Activated T-helper 1 cell treated with anti-CD3 and anti-CD28 coated beads, Interleukin-12 subunit alpha, Interleukin-12 subunit beta, Interleukin-2, Interleukin-4 antibody, amounts not matched to agents 30 ng/mL and 10 ng/mL and 1 ng/mL, durations not matched to agents 14 hours and 24 hours and 36 hours (primary cell): ENCODE measurements at regions of chrX and their contacts with region 1.

Region 1: DNA sequence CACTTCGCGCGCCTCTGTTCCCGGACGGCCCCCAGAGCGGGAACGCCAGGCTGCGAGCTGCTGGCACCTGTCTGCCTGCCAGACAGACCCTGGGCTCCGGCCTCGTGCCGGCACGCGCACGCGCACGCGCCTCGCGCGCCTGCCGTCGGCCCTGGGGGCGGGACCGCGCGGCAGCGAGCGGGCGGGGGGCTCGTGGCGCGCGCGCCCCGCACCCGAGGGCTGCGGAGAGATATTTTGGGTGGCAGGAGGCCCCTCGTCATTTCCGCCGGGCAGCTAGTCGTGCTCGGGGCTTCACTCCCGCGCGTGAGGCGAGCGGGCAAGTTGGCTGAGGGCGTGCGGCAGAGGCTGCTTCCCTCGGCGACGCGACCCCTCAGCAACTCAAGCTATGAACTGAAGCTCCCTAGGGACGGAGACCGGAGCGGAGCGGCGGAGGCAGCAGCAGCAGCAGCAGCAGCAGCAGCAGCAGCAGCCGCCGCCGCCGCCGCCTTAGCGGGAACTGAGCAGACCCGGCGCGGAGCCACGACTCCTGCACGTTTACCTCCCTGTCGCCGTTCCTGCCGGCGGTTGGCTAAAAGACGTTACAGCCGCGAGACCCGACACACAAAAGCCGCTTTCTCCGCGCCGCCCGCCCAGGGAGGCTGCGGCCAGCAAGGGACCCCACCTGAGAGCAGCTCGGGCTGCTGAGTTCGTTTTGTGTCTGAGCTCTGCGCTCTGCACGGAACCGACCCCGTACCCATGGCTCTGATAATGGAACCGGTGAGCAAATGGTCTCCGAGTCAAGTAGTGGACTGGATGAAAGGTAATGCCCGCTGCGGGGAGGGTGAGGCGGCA is at the start of gene CNKSR2:
- DNase-seq: peak; percentile 60
- H3K4me3 Mint-ChIP-seq: peak within 1 kb of the TSS; percentile 91
- H3K27ac Mint-ChIP-seq: peak within 1 kb of the TSS; percentile 40
- H3K4me1 Mint-ChIP-seq: peaks cover 14% of the 10 kb centered on the region
- H3K27me3 Mint-ChIP-seq: peaks cover 6% of the 10 kb centered on the region
- total RNA-seq, gene CNKSR2: 7.4 and 9.1 TPM in 2 replicates

Region 2: DNA sequence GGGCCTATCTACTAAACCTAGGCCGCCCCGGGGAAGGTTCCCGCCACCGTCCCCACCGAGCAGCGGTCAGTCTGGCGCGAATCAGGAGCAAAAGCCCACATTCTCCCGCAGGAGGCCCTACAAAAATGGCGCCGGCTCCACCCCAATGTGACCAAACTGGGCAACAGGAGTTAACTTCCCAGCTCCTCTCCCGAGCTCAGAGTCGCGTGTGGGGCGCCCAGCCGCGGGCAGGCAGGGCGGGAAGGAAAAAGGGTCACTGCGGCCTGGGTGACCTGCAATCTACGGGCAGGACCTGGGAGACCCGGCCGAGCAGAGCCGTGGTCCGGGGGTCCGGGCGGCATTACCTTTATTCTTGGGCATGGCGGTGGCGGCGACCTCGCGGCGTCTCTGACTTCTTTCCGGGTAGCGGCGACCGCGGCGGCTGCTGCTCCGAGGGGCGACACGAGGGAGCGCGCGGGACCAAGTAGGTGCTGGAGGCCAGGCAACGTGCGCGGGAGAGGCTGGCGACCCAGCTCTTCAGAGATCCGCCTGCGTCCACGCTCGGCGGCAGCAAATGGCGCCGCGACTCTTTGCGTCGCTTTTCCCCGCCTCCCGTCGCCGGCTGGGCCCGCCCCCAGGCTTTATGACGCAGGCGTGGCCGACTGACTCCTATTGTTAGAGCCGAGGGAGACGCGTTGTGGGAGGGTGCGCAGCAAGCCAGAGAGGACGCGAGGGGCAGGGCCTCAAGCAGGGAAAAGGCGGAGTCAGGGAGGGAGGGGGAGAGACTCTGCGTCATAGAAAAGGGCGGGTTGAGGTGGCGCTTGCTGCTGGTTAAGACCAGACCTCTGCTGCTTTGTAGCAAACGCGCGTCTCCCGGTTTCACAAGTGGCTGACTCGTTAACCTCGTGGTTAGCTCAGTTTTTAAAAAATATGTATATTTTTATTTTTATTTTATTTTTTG is 1232.8 kb before region 1 on chrX and contains the start of gene EIF1AX:
- intact Hi-C with region 1: loop called (anchors 5 kb)
- DNase-seq: peak; percentile 93
- H3K4me3 Mint-ChIP-seq: peak within 1 kb of the TSS; percentile 90
- H3K27ac Mint-ChIP-seq: peak within 1 kb of the TSS; percentile 84
- H3K4me1 Mint-ChIP-seq: peaks cover 29% of the 10 kb centered on the region
- H3K27me3 Mint-ChIP-seq: no peaks in the 10 kb centered on the region
- total RNA-seq, gene EIF1AX: 107 TPM in 2 replicates

Region 3: DNA sequence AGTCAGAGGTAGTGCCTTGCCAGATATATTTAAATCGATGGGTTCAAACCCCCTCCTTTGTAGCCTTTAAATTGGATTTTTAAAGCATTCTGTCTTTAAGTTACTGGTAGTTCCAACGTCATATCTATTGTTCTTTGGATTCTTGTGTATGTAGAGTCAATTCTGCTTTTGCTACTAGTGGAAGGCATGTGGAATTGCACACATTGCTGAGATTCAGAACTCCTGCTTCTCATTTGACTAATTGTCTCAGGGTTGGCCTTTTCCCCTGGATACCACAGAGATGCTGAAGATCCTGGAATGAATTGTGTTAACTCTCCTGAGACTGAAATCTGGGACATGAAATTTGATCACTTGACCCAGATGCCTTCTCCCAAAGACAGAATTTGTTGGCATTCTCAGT is 779.4 kb before region 1 on chrX:
- intact Hi-C with region 1: loop called (anchors 10 kb)
- DNase-seq: no peak
- H3K4me3 Mint-ChIP-seq: no peak overlapping the region
- H3K27ac Mint-ChIP-seq: no peak overlapping the region
- H3K4me1 Mint-ChIP-seq: peaks cover 25% of the 10 kb centered on the region
- H3K27me3 Mint-ChIP-seq: peaks cover 2% of the 10 kb centered on the region

Region 4: DNA sequence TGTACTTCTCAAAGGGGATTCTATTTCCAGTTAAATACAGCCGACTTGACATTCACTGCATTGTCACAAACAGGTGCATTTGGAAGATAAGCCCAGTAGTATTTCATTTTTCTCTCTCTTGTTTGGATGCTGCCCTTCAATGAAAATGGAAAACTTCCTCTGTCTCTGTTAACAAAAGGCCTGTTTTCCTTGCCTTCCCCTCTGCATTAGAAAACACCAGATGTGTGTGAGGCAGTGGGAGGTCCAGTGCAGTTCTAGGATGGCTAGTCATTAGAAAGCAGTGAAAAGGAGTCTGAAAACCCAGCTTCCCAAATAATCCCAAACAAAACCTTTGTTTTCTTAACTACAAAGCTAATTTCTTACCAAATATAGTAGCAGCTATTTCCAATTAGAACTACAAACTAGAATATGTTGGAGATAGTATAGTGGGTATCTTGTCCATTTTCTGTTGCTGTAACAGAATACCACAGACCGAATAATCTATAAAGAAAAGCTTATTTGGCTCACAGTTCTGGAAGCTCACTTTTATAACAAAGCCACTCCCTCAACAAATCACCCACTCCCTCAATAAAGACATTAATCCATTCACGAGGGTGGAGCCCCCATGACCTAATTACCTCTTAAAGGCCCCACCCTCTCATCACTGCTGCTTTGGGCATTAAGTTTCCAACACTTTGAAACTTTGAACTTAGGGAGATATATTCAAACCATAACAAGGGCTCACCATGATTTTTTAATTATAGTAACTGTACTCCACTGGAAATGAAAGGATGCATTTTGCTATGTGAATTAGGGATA is 655.6 kb before region 1 on chrX:
- intact Hi-C with region 1: no loop called
- DNase-seq: no peak
- H3K4me3 Mint-ChIP-seq: no peak overlapping the region
- H3K27ac Mint-ChIP-seq: no peak overlapping the region
- H3K4me1 Mint-ChIP-seq: no peaks in the 10 kb centered on the region
- H3K27me3 Mint-ChIP-seq: no peaks in the 10 kb centered on the region

Region 5: GRCh38 chrX:21479695-21480270 is 105.4 kb after region 1 on chrX:
- intact Hi-C with region 1: loop called (anchors 5 kb)
- DNase-seq: no peak
- H3K4me3 Mint-ChIP-seq: no peak overlapping the region
- H3K27ac Mint-ChIP-seq: no peak overlapping the region
- H3K4me1 Mint-ChIP-seq: no peaks in the 10 kb centered on the region
- H3K27me3 Mint-ChIP-seq: peaks cover 2% of the 10 kb centered on the region

Region 6: DNA sequence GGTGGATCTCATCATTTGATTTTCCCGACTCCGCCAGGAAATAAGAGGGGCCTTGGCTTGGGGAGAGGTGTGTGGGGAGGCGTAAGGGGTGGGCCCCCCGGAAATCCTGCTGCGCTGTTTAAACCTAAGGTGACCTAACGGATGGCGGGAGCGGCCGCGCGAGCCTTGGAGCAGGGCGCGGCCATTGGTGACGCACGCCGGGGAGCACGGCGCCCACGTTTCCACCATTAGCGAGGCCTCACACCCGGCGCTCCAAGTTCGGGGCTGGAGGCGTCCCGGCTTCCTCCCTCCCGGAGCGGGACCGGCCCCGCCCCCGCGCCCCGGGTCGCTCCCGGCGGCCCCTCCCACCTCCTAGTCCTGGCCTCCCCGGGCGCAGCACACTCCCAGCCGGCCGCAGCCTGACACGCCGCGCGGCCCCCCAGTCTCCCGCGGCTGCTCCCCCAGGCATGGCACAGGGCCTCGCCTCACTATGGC is 566.0 kb after region 1 on chrX and contains the start of gene SMS:
- intact Hi-C with region 1: loop called (anchors 10 kb)
- DNase-seq: peak; percentile 23
- H3K4me3 Mint-ChIP-seq: peak within 1 kb of the TSS; percentile 90
- H3K27ac Mint-ChIP-seq: peak within 1 kb of the TSS; percentile 92
- H3K4me1 Mint-ChIP-seq: peaks cover 35% of the 10 kb centered on the region
- H3K27me3 Mint-ChIP-seq: no peaks in the 10 kb centered on the region
- total RNA-seq, gene SMS: 144 and 145 TPM in 2 replicates